ENCODE measurements at regions of chr10 and their contacts with region 1.

Region 1: DNA sequence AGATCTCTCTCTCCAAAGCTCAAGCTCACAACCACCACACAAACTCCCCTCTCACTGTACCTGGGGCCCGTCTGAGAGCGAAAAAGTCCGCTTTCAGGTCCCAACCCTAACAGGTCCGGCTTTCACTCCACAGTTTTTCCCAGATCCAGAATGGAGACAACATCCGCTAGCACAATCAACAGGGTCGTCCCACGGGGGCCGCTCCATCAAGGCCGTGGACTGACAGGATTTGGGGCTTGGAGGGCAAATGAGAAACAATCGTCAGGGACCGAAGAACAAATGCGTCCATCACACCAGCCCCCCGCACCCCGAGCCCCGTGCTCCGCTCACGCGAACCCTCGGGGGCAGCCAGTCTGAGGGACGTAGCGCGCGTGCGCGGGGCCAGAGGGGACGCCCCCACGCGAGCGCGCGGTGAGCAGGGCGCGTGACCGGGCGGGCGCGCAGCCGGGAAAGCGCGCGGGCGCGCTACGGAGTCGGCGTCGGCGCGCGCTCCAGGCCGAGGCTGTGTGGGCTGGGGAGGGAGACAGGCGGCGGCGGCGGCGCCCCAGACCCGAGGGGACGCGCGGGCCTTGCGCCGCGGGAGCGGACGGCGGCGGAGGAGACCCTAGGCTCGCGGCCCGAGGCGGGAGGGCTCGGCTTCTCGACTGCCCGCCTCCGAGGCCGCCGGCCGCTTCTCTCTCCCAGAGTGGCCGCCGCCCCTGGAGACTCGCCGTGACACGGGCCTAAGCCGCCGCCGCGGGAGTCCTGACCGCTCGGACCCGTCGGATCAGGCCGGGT is at the start of gene SLK:
- DNase-seq: peak; percentile 89
- ATAC-seq: peak; percentile 87
- H3K4me3 Mint-ChIP-seq: peak within 1 kb of the TSS; percentile 95
- H3K27ac Mint-ChIP-seq: peak within 1 kb of the TSS; percentile 92
- H3K4me1 Mint-ChIP-seq: peaks cover 42% of the 10 kb centered on the region
- H3K27me3 Mint-ChIP-seq: no peaks in the 10 kb centered on the region
- CTCF ChIP-seq: no peak
- total RNA-seq, gene SLK: 12.8 and 14.0 TPM in 2 replicates

Region 2: DNA sequence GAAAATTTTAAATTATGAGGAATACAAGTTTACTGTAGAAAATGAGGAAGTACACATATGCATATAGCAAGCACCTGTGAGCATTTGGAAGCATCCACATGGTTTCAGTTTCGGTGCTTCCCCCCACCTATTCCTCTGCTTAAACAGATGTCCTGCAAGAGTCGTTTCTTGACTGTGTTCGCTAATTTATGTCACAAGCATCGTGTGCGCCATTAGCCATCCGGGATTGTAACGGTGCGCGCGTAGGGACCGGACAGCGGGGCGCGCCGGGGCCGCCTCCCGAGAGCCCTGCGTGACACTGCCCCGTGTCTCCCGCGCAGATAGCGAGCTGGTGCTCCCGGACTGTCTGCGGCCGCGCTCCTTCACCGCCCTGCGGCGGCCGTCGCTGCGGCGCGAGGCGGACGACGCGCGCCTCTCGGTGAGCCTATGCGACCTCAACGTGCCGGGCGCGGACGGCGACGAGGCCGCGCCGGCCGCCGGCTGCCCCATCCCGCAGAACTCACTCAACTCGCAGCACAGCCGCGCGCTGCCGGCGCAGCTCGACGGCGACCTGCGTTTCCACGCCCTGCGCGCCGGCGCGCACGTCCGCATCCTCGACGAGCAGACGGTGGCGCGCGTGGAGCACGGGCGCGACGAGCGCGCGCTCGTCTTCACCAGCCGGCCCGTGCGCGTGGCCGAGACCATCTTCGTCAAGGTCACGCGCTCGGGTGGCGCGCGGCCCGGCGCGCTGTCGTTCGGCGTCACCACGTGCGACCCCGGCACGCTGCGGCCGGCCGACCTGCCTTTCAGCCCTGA is 382.4 kb before region 1 on chr10:
- CTCF ChIA-PET with region 1: no interaction called
- POLR2A ChIA-PET with region 1: no interaction called
- intact Hi-C with region 1: loop called (anchors 5 kb)
- DNase-seq: peak; percentile 47
- ATAC-seq: peak; percentile 78
- H3K4me3 Mint-ChIP-seq: peak overlapping the region; percentile 82
- H3K27ac Mint-ChIP-seq: peak overlapping the region; percentile 79
- H3K4me1 Mint-ChIP-seq: peaks cover 12% of the 10 kb centered on the region
- H3K27me3 Mint-ChIP-seq: no peaks in the 10 kb centered on the region
- CTCF ChIP-seq: no peak

Region 3: GRCh38 chr10:103911021-103911459 is 55.8 kb before region 1 on chr10:
- CTCF ChIA-PET with region 1: no interaction called
- POLR2A ChIA-PET with region 1: interaction called, 8 read pairs
- intact Hi-C with region 1: loop called (anchors 1 kb)
- DNase-seq: no peak
- ATAC-seq: peak; percentile 42
- H3K4me3 Mint-ChIP-seq: no peak overlapping the region
- H3K27ac Mint-ChIP-seq: peak overlapping the region; percentile 86
- H3K4me1 Mint-ChIP-seq: peaks cover 53% of the 10 kb centered on the region
- H3K27me3 Mint-ChIP-seq: no peaks in the 10 kb centered on the region
- CTCF ChIP-seq: no peak

Region 4: GRCh38 chr10:103983367-103983911 is 16.6 kb after region 1 on chr10:
- CTCF ChIA-PET with region 1: no interaction called
- POLR2A ChIA-PET with region 1: interaction called, 5 read pairs
- intact Hi-C with region 1: loop called (anchors 2 kb)
- DNase-seq: no peak
- ATAC-seq: peak; percentile 66
- H3K4me3 Mint-ChIP-seq: peak overlapping the region; percentile 41
- H3K27ac Mint-ChIP-seq: peak overlapping the region; percentile 74
- H3K4me1 Mint-ChIP-seq: peaks cover 50% of the 10 kb centered on the region
- H3K27me3 Mint-ChIP-seq: no peaks in the 10 kb centered on the region
- CTCF ChIP-seq: no peak